Activated T-helper 2 cell treated with anti-CD3 and anti-CD28 coated beads, Interferon-gamma antibody, Interleukin-2, Interleukin-4, amounts not matched to agents 10 μg/mL and 5 μg/mL and 100 μg/mL, durations not matched to agents 14 hours and 24 hours and 36 hours (primary cell): ENCODE measurements at regions of chr17 and their contacts with region 1.

Region 1: DNA sequence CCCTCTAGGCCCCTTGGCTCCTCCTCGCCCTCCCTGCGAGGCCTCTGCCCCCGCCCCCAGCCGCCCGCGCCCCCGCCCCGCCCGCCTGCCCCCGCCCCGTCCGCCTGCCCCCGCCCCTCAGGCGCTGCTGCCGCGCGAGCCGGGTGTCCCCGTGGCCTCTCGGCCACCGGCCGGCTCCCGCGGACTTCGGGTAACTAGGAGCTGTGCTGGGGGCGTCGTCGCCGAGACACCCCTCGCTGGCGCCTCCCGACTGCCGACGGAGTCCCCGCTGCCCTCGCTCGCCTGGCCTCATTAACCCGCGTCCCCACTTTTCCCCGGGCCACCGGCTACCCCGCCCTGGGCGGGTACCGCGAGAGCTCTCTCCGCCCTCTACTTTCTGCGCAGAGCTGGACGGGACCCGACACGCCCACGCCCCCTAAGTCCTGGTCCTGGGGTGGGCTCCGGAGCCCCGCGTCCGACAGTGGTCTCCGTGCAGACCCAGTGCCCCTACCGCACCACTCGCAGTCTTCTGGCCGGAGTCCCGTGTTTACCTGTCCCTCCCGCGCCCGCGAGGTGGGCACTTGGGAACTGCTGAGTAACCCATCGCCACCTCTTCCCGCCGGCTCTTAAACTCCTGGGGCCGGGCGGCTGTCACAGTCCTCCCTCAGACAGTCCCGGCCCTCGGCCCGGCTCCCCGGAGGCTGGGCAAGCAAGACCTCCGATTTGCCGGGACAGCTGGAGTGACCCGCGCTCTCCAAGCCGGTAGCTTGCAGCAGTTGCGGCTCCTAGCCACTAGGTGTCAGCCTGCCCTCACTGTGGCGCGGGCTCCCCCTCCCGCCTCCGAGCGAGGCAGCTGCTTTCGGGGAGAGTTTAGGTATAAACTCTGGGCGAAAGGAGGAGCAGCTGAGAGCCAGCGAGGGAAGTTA is at the start of gene TLCD1:
- DNase-seq: peak; percentile 89
- H3K4me3 Mint-ChIP-seq: peak within 1 kb of the TSS; percentile 97
- H3K27ac Mint-ChIP-seq: peak within 1 kb of the TSS; percentile 99
- H3K4me1 Mint-ChIP-seq: peaks cover 45% of the 10 kb centered on the region
- H3K27me3 Mint-ChIP-seq: no peaks in the 10 kb centered on the region
- total RNA-seq, gene TLCD1: 8.0 and 8.2 TPM in 2 replicates

Region 2: GRCh38 chr17:28743225-28744103 is 17.0 kb after region 1 on chr17 and contains the start of gene TRAF4:
- intact Hi-C with region 1: loop called (anchors 1 kb)
- DNase-seq: peak; percentile 70
- H3K4me3 Mint-ChIP-seq: peak within 1 kb of the TSS; percentile 90
- H3K27ac Mint-ChIP-seq: peak within 1 kb of the TSS; percentile 81
- H3K4me1 Mint-ChIP-seq: peaks cover 27% of the 10 kb centered on the region
- H3K27me3 Mint-ChIP-seq: no peaks in the 10 kb centered on the region
- total RNA-seq, gene TRAF4: 125 and 129 TPM in 2 replicates

Region 3: GRCh38 chr17:28812091-28812747 is 85.7 kb after region 1 on chr17:
- intact Hi-C with region 1: loop called (anchors 2 kb)
- DNase-seq: peak; percentile 95
- H3K4me3 Mint-ChIP-seq: peak overlapping the region; percentile 92
- H3K27ac Mint-ChIP-seq: peak overlapping the region; percentile 91
- H3K4me1 Mint-ChIP-seq: peaks cover 33% of the 10 kb centered on the region
- H3K27me3 Mint-ChIP-seq: no peaks in the 10 kb centered on the region

Region 4: DNA sequence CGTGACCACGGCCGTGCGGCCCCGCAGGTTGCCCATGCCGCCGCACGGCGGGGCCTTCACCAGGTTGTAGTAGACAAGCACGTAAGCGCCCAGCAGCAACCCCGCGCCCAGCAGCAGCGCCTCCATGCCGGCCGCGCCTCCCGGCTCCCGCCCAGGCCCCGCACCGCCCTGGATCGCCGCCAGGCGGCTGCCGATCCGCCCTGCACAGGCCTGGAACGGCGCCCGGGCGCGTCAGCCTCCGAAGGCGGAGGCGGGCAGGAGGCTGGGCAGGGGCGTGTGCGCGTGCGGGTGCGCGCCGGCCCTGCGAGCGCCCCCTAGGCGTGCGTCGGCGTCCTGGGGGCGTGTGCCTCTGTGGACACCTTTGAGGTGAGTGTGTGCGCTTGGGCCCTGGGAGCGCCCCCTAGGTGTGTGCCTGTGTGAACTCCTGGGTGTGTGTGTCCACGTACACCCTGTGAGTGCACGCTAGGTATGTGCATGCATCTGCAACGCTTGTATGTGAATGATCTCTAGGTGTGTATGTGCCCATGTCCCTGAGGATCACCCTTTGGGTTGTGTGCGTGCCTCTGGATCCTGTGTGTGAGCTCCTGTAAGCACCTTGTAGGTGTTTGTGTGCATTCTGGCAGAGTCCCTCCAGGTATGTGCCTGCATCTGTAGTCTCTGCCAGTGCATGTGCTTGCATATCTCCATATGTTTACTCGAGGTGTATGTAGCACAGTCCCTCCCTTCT is 176.5 kb after region 1 on chr17 and contains the start of gene DHRS13:
- intact Hi-C with region 1: loop called (anchors 2 kb)
- DNase-seq: peak; percentile 91
- H3K4me3 Mint-ChIP-seq: peak within 1 kb of the TSS; percentile 90
- H3K27ac Mint-ChIP-seq: peak within 1 kb of the TSS; percentile 86
- H3K4me1 Mint-ChIP-seq: peaks cover 32% of the 10 kb centered on the region
- H3K27me3 Mint-ChIP-seq: no peaks in the 10 kb centered on the region
- total RNA-seq, gene DHRS13: 30.6 and 32.9 TPM in 2 replicates

Region 5: GRCh38 chr17:29111816-29112499 is 385.5 kb after region 1 on chr17:
- intact Hi-C with region 1: loop called (anchors 10 kb)
- DNase-seq: peak; percentile 48
- H3K4me3 Mint-ChIP-seq: no peak overlapping the region
- H3K27ac Mint-ChIP-seq: no peak overlapping the region
- H3K4me1 Mint-ChIP-seq: peaks cover 2% of the 10 kb centered on the region
- H3K27me3 Mint-ChIP-seq: no peaks in the 10 kb centered on the region

Region 6: GRCh38 chr17:29579866-29580771 is 853.6 kb after region 1 on chr17:
- intact Hi-C with region 1: loop called (anchors 10 kb)
- DNase-seq: peak; percentile 82
- H3K4me3 Mint-ChIP-seq: no peak overlapping the region
- H3K27ac Mint-ChIP-seq: peak overlapping the region; percentile 84
- H3K4me1 Mint-ChIP-seq: peaks cover 14% of the 10 kb centered on the region
- H3K27me3 Mint-ChIP-seq: no peaks in the 10 kb centered on the region